ENCODE measurements at regions of chr6 and their contacts with region 1.

Region 1: GRCh38 chr6:122758927-122759334 is 20.6 kb upstream of the FABP7 start:
- DNase-seq: peak; percentile 34
- H3K4me3 Mint-ChIP-seq: no peak overlapping the region
- H3K27ac Mint-ChIP-seq: no peak overlapping the region
- H3K4me1 Mint-ChIP-seq: peaks cover 13% of the 10 kb centered on the region
- H3K27me3 Mint-ChIP-seq: no peaks in the 10 kb centered on the region

Region 2: GRCh38 chr6:121881974-121882667 is 876.8 kb before region 1 on chr6:
- CTCF ChIA-PET with region 1: no interaction called
- intact Hi-C with region 1: no loop called
- DNase-seq: no peak
- H3K4me3 Mint-ChIP-seq: no peak overlapping the region
- H3K27ac Mint-ChIP-seq: no peak overlapping the region
- H3K4me1 Mint-ChIP-seq: no peaks in the 10 kb centered on the region
- H3K27me3 Mint-ChIP-seq: no peaks in the 10 kb centered on the region

Region 3: DNA sequence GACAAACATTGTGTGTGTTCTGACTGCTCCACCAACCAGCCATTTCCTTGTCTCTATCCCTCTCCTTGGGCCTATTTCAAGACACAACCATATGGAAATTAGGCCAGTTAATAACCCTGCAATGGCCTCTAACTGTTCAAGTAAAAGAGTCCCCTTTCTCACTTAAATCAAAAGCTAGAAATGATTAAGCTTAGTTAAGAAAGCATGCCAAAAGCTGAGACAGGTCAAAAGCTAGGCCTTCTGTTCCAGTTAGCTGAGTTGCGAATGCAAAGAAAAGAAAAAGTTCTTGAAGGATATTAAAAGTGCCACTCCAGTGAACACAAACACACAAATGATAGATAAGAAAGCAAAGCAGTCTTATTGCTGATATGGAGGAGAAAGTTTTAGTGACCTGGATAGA is 309.9 kb before region 1 on chr6:
- CTCF ChIA-PET with region 1: no interaction called
- intact Hi-C with region 1: no loop called
- DNase-seq: no peak
- H3K4me3 Mint-ChIP-seq: no peak overlapping the region
- H3K27ac Mint-ChIP-seq: peak overlapping the region; percentile 33
- H3K4me1 Mint-ChIP-seq: peaks cover 25% of the 10 kb centered on the region
- H3K27me3 Mint-ChIP-seq: no peaks in the 10 kb centered on the region

Region 4: DNA sequence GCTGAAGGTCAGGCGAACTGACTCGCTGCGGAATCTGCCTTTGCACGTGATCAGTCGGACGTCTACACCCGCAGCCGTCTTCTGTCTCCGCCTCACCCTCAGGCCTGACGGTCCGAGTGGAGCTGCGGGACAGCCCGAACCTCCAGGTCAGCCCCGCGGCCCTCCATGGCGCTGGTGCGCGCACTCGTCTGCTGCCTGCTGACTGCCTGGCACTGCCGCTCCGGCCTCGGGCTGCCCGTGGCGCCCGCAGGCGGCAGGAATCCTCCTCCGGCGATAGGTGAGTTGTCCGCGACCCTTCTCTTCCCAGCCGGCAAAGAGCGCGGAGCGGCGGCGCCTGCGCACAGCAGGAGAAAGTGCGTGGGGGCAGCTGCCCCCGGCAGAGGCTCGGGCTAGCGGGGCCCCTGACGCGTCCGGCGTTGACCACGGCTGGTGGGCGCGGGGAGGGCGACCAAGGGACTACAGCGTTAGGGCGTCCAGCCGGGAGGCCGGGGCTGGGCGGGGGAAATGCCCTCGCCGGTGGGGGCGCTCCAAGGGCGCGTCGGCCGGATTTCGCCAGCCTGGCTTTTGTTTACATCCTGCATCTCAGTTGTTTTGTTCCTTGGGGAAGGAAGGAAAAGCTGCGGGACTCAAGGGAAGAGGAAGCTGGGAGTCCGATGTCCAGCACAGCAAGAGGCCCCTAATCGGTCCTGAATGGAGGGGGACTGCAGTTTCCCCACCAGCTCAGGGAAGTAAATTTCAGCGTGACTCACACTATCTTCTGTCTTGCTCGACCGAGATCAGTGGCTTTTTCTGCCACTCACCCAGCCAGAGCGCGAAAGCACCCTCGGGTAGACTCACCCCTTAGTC is 30.5 kb after region 1 on chr6 and contains the start of gene SMPDL3A:
- CTCF ChIA-PET with region 1: no interaction called
- intact Hi-C with region 1: loop called (anchors 1 kb)
- DNase-seq: peak; percentile 54
- H3K4me3 Mint-ChIP-seq: peak within 1 kb of the TSS; percentile 85
- H3K27ac Mint-ChIP-seq: no peak within 1 kb of the TSS
- H3K4me1 Mint-ChIP-seq: peaks cover 14% of the 10 kb centered on the region
- H3K27me3 Mint-ChIP-seq: peaks cover 64% of the 10 kb centered on the region
- total RNA-seq, gene SMPDL3A: 0.31 to 0.49 TPM

Region 5: DNA sequence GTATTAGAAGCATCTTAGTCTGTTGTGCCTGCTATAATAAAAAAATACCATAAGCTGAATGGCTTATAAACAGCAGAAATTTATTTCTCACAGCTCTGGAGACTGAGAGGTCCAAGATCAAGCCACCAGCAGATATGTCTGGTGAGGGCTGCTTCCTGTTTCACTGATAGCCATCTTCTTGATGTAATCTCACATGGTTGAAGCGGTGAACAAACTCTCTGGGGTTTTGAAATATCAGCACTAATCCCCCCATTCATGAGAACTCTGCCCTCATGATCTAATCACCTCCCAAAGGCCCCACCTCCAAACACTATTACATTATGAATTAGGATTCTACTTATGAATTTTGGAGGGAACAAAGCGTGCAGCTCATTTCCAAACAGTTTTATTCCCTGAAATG is 225.5 kb after region 1 on chr6:
- CTCF ChIA-PET with region 1: no interaction called
- intact Hi-C with region 1: no loop called
- DNase-seq: no peak
- H3K4me3 Mint-ChIP-seq: no peak overlapping the region
- H3K27ac Mint-ChIP-seq: no peak overlapping the region
- H3K4me1 Mint-ChIP-seq: no peaks in the 10 kb centered on the region
- H3K27me3 Mint-ChIP-seq: no peaks in the 10 kb centered on the region